ENCODE measurements at regions of chr2 and their contacts with region 1.

Region 1: GRCh38 chr2:233223059-233223894 is 28.2 kb upstream of the ATG16L1 start:
- DNase-seq: peak; percentile 62
- ATAC-seq: peak; percentile 80
- H3K4me3 ChIP-seq: no peak overlapping the region
- H3K4me3 Mint-ChIP-seq: peak overlapping the region; percentile 51
- H3K27ac ChIP-seq: no peak overlapping the region
- H3K27ac Mint-ChIP-seq: peak overlapping the region; percentile 44
- H3K4me1 ChIP-seq: peaks cover 0 to 6% of the 10 kb centered on the region in 2 donors
- H3K4me1 Mint-ChIP-seq: peaks cover 9% of the 10 kb centered on the region
- H3K27me3 ChIP-seq: no peaks in the 10 kb centered on the region
- H3K27me3 Mint-ChIP-seq: no peaks in the 10 kb centered on the region
- CTCF ChIP-seq: no peak

Region 2: DNA sequence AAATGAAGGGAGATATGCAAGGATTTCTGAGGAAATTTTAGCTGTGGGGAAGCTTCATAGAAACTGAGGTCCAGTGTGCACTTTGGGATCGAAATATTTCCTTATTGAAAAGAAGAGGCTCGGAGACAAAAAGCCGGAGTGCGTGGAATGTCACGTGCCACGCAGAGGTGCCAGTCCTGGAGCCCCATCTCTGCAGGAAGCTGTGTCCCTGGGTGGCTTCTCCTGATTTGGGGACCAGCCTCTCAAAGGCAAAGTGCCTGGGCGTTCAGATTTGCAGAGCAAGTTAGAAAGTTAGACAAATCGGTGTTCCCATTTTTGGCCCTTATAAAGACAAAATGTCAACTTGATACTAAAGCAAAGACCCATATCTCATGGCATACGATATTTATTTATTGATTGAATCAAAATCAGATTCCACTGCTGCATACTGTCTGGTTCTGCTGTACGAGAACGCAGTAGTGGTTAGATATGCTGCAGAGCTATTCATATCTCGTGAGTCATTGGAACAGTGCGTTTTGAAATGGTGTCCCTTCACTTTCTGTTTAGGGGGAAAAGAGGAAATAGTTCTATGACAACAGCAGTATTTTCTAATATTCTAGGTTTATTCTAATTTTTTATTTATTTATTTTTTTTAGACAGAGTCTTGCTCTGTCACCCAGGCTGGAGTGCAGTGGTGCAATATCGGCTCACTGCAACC is 19.1 kb after region 1 on chr2:
- CTCF ChIA-PET with region 1: interaction called, 10 read pairs
- POLR2A ChIA-PET with region 1: interaction called, 3 read pairs
- intact Hi-C with region 1: no loop called
- DNase-seq: peak; percentile 42
- ATAC-seq: peak; percentile 55
- H3K4me3 ChIP-seq: no peak overlapping the region
- H3K4me3 Mint-ChIP-seq: peak overlapping the region; percentile 70
- H3K27ac ChIP-seq: no peak overlapping the region
- H3K27ac Mint-ChIP-seq: peak overlapping the region; percentile 41
- H3K4me1 ChIP-seq: peaks cover 28 to 35% of the 10 kb centered on the region in 2 donors
- H3K4me1 Mint-ChIP-seq: peaks cover 28% of the 10 kb centered on the region
- H3K27me3 ChIP-seq: no peaks in the 10 kb centered on the region
- H3K27me3 Mint-ChIP-seq: no peaks in the 10 kb centered on the region
- CTCF ChIP-seq: no peak